AG04450 (cell line): ENCODE measurements at regions of chr5 and their contacts with region 1.

Region 1: GRCh38 chr5:98768160-98769005 is 5.1 kb upstream of the RGMB start:
- DNase-seq: no peak
- H3K4me3 ChIP-seq: peak overlapping the region; percentile 92
- H3K27ac ChIP-seq: peak overlapping the region; percentile 97
- H3K27me3 ChIP-seq: no peaks in the 10 kb centered on the region
- CTCF ChIP-seq: peak; percentile 99

Region 2: GRCh38 chr5:97231025-97231636 is 1537.3 kb before region 1 on chr5:
- CTCF ChIA-PET with region 1: interaction called, 22 read pairs
- POLR2A ChIA-PET with region 1: no interaction called
- DNase-seq: peak; percentile 50
- H3K4me3 ChIP-seq: no peak overlapping the region
- H3K27ac ChIP-seq: no peak overlapping the region
- H3K27me3 ChIP-seq: no peaks in the 10 kb centered on the region
- CTCF ChIP-seq: peak; percentile 88

Region 3: DNA sequence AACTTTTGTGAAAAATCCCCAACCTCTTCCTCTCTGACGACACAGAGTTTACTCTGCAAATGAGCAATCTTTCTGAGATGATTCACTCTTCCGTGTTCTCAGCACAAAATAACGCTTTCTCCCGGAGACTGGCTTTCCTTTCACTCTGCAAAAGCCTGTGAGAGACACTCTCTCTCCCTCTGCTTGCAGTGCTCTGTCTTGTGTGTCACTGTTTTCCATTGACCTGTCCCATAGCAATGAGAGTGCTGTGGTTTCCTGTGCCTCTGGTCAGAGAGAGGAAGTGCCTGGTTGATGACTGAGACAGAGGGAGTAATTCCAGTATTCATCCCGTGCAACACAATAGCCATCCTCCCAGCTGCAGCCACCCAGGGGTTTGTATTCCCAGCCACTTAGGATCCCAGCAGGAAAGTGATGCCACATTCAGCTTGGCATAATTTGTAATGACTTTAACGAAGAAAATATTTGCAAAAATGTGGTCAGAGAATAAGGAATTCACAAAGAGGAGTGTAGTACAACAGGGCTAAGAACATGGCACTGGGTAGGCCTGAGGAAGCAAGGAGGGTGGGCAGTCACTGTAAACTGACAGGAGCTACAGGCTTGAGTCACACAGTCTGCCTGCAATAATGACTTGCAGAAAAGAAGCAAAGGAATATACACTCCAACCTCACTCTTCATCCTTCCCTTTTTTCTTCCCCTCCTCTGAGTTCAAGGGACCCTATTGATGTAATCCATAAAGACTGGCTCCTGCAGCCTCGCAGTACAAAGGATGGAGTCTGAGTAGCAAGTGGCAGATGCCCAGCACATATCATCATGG is 458.4 kb before region 1 on chr5:
- CTCF ChIA-PET with region 1: interaction called, 9 read pairs
- POLR2A ChIA-PET with region 1: interaction called, 16 read pairs
- DNase-seq: peak; percentile 83
- H3K4me3 ChIP-seq: peak overlapping the region; percentile 50
- H3K27ac ChIP-seq: peak overlapping the region; percentile 97
- H3K27me3 ChIP-seq: no peaks in the 10 kb centered on the region
- CTCF ChIP-seq: no peak

Region 4: GRCh38 chr5:98365126-98365525 is 403.3 kb before region 1 on chr5:
- CTCF ChIA-PET with region 1: interaction called, 14 read pairs
- POLR2A ChIA-PET with region 1: no interaction called
- DNase-seq: no peak
- H3K4me3 ChIP-seq: no peak overlapping the region
- H3K27ac ChIP-seq: no peak overlapping the region
- H3K27me3 ChIP-seq: no peaks in the 10 kb centered on the region
- CTCF ChIP-seq: no peak

Region 5: DNA sequence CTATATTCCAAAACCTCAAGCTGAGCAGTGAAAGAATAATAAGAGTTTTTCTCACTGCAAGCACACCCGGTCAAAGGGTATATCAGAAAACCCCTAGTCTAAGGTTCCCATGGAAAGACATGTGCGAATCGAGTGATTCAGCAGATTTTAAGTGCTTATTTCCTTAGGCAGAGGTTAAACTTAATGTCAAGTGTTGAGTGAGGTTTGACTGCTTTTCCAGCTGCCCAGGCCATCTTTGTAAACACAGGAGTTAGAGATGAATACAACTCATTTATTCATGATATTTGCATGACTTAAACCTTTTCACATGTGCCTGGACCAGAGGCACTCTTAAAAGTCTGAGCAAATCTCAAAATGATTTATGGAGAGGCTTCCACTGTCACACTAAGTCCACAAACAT is 132.7 kb before region 1 on chr5:
- CTCF ChIA-PET with region 1: interaction called, 15 read pairs
- POLR2A ChIA-PET with region 1: interaction called, 3 read pairs
- DNase-seq: no peak
- H3K4me3 ChIP-seq: no peak overlapping the region
- H3K27ac ChIP-seq: no peak overlapping the region
- H3K27me3 ChIP-seq: no peaks in the 10 kb centered on the region
- CTCF ChIP-seq: no peak

Region 6: DNA sequence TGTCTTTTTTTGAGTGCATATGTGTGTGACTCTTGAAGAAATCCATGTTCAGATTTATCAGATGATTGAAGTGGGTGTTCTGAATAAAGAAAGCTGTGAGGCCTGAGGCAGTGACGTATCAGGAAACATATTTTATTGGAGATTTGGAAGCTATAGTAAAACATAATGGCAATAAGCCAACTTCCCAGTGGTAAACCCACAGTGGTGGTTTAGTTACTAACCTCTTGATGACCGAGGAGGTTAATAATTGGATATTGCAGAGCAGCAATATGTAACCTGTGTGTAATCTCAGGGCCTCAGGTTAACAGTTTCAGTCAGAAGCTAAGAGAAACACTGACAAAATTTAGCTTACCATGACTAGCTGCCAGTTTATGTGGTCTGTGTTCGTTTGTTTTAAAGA is 12.0 kb after region 1 on chr5:
- CTCF ChIA-PET with region 1: interaction called, 38 read pairs
- POLR2A ChIA-PET with region 1: no interaction called
- DNase-seq: no peak
- H3K4me3 ChIP-seq: no peak overlapping the region
- H3K27ac ChIP-seq: no peak overlapping the region
- H3K27me3 ChIP-seq: no peaks in the 10 kb centered on the region
- CTCF ChIP-seq: no peak